ENCODE measurements at regions of chr3 and their contacts with region 1.

Region 1: DNA sequence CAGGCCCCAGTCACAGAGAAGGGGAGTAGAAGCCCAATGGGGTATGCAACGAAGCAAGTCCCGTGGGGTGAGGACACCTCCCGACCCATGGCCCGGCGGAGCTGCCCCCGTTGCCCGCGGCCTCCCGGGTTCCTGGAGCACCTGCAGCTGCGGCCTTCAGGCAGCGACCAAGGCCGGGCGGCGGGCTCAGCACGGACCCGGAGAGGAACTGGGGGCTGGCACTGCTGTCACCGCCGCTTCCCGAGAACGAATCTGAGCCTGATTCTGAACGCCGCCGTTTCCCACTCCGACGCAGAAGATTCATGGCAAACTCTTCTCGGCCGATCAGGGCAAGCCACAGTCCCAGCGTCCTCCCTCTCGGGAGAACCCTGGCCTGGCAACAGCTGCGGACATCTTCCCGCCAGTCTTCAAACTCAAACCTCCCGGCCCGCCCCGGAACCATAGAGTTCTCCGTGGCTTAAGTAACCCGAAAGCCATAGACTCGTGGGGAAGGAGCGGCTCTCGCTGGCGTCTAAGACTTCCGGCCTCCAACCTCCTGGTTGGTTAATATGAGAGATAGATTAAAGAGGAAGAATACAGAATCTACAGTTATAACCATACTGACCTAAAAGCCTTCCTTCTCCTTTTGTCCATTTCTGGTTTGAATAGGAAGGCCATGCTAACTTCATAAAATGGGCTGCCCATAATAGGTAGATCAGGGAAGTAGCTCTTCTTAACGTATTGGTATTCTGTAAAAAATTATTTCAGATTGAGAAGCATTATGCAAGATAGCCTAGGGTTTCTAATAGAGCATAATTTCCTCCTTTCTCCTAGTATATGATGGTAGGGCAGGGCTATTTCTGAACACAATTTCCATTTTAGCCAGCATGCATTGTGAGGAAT is at the start of gene POLQ:
- DNase-seq: peak; percentile 84 to 92 (median 88)
- H3K4me3 ChIP-seq: peak within 1 kb of the TSS; percentile 90 to 99
- H3K4me3 Mint-ChIP-seq: peak within 1 kb of the TSS; percentile 89 to 95 (median 92)
- H3K27ac ChIP-seq: peak within 1 kb of the TSS; percentile 64
- H3K27ac Mint-ChIP-seq: peak within 1 kb of the TSS; percentile 89 to 96 (median 92)
- H3K4me1 ChIP-seq: peaks cover 10% of the 10 kb centered on the region
- H3K4me1 Mint-ChIP-seq: peaks cover 6 to 11% (median 10%) of the 10 kb centered on the region in 4 donors
- H3K27me3 ChIP-seq: no peaks in the 10 kb centered on the region
- H3K27me3 Mint-ChIP-seq: no peaks in the 10 kb centered on the region
- total RNA-seq, gene POLQ: 0.28 to 0.35 TPM

Region 2: DNA sequence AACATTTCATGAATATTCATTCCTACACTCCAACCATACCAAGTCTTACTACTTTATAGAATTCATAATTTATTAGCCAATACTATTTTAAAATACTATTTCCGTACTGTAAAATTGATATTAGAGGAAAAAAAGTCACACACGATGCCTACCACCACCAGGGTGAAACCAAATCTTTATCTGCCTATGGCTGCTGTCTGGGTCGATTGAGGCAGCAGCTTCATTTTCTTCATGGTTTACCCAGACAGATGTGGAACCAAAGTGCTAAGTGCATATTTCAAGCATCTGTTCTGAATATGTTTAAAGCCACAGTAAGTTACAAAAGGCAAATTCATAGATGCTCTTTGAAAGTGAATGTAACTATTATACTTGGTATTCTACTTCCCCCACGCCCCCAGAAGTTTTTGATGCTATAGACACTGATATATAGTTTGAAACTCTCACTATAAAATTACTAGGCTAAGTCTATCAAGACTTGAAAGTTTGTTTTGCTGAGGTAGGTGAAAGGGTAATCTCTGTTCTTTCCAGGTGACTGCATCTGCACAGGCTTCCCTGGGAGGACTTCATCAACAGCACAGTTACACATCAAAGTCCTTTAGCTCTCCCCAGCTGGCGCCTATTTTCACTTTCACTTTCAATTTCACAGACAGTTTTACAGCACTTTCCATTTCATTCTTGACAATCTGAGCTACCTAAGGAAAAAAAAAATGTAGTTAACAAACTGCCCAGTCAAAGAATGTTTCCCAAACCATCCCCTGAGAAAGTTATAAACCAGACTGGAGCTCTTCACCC is 113.9 kb before region 1 on chr3:
- CTCF ChIA-PET with region 1: interaction called, 6 read pairs
- POLR2A ChIA-PET with region 1: no interaction called
- intact Hi-C with region 1: loop called (anchors 1 kb)
- DNase-seq: peak; percentile 63 to 77 (median 73)
- H3K4me3 ChIP-seq: peak overlapping the region in 1 of 2 donors; percentile 51
- H3K4me3 Mint-ChIP-seq: peak overlapping the region; percentile 71 to 88 (median 82)
- H3K27ac ChIP-seq: peak overlapping the region; percentile 25
- H3K27ac Mint-ChIP-seq: peak overlapping the region; percentile 70 to 94 (median 83)
- H3K4me1 ChIP-seq: peaks cover 21% of the 10 kb centered on the region
- H3K4me1 Mint-ChIP-seq: peaks cover 10 to 20% (median 14%) of the 10 kb centered on the region in 4 donors
- H3K27me3 ChIP-seq: no peaks in the 10 kb centered on the region
- H3K27me3 Mint-ChIP-seq: no peaks in the 10 kb centered on the region

Region 3: GRCh38 chr3:121592856-121593702 is 47.3 kb after region 1 on chr3 and contains the start of gene FBXO40:
- CTCF ChIA-PET with region 1: no interaction called
- POLR2A ChIA-PET with region 1: no interaction called
- intact Hi-C with region 1: no loop called
- DNase-seq: no peak
- H3K4me3 ChIP-seq: no peak within 1 kb of the TSS
- H3K4me3 Mint-ChIP-seq: no peak within 1 kb of the TSS
- H3K27ac ChIP-seq: no peak within 1 kb of the TSS
- H3K27ac Mint-ChIP-seq: peak within 1 kb of the TSS in 1 of 7 donors; percentile 9
- H3K4me1 ChIP-seq: no peaks in the 10 kb centered on the region
- H3K4me1 Mint-ChIP-seq: peaks cover 0 to 3% (median 0%) of the 10 kb centered on the region in 4 donors
- H3K27me3 ChIP-seq: no peaks in the 10 kb centered on the region
- H3K27me3 Mint-ChIP-seq: peaks cover 1 to 2% of the 10 kb centered on the region in 2 donors
- total RNA-seq, gene FBXO40: not detected

Region 4: GRCh38 chr3:121834696-121835464 is 289.1 kb after region 1 on chr3 and contains the starts of genes EAF2 and IQCB1:
- CTCF ChIA-PET with region 1: no interaction called
- POLR2A ChIA-PET with region 1: interaction called, 4 read pairs
- intact Hi-C with region 1: loop called (anchors 1 kb)
- DNase-seq: peak; percentile 97 to 98 (median 97)
- H3K4me3 ChIP-seq: peak within 1 kb of the TSS; percentile 83 to 96
- H3K4me3 Mint-ChIP-seq: peak within 1 kb of the TSS; percentile 92 to 98 (median 94)
- H3K27ac ChIP-seq: peak within 1 kb of the TSS; percentile 84
- H3K27ac Mint-ChIP-seq: peak within 1 kb of the TSS; percentile 77 to 98 (median 94)
- H3K4me1 ChIP-seq: peaks cover 30% of the 10 kb centered on the region
- H3K4me1 Mint-ChIP-seq: peaks cover 32 to 54% (median 44%) of the 10 kb centered on the region in 4 donors
- H3K27me3 ChIP-seq: no peaks in the 10 kb centered on the region
- H3K27me3 Mint-ChIP-seq: no peaks in the 10 kb centered on the region
- total RNA-seq, gene EAF2: 5.7 to 6.3 TPM
- total RNA-seq, gene IQCB1: 37.9 to 38.2 TPM

Region 5: DNA sequence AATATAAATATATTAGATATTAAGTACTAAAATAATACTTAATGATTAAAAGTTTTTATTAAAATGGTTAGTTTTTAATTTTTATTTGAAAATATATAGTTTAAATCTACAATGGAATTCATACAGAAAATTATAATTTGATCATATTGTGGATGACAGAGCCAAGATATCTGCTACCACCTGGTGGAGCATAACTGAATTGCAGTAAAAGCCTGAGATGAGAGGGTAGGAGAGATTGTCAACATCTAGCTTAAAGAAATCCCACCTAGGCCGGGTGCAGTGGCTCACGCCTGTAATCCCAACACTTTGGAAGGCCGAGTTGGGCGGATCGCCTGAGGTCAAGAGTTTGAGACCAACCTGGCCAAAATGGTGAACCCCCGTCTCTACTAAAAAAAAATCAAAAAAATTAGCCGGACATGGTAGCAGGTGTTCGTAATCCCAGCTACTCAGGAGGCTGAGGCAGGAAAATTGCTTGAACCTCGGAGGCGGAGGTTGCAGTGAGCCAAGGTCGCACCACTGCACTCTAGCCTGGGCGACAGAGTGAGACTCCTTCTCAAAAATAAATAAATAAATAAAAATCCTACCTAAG is 754.2 kb after region 1 on chr3:
- CTCF ChIA-PET with region 1: interaction called, 19 read pairs
- POLR2A ChIA-PET with region 1: no interaction called
- intact Hi-C with region 1: loop called (anchors 1 kb)
- DNase-seq: peak in 4 of 5 donors; percentile 36 to 50 (median 48)
- H3K4me3 ChIP-seq: no peak overlapping the region
- H3K4me3 Mint-ChIP-seq: no peak overlapping the region
- H3K27ac ChIP-seq: no peak overlapping the region
- H3K27ac Mint-ChIP-seq: no peak overlapping the region
- H3K4me1 ChIP-seq: peaks cover 19% of the 10 kb centered on the region
- H3K4me1 Mint-ChIP-seq: peaks cover 5 to 19% (median 10%) of the 10 kb centered on the region in 4 donors
- H3K27me3 ChIP-seq: no peaks in the 10 kb centered on the region
- H3K27me3 Mint-ChIP-seq: peaks cover 0 to 3% of the 10 kb centered on the region in 2 donors

Region 6: DNA sequence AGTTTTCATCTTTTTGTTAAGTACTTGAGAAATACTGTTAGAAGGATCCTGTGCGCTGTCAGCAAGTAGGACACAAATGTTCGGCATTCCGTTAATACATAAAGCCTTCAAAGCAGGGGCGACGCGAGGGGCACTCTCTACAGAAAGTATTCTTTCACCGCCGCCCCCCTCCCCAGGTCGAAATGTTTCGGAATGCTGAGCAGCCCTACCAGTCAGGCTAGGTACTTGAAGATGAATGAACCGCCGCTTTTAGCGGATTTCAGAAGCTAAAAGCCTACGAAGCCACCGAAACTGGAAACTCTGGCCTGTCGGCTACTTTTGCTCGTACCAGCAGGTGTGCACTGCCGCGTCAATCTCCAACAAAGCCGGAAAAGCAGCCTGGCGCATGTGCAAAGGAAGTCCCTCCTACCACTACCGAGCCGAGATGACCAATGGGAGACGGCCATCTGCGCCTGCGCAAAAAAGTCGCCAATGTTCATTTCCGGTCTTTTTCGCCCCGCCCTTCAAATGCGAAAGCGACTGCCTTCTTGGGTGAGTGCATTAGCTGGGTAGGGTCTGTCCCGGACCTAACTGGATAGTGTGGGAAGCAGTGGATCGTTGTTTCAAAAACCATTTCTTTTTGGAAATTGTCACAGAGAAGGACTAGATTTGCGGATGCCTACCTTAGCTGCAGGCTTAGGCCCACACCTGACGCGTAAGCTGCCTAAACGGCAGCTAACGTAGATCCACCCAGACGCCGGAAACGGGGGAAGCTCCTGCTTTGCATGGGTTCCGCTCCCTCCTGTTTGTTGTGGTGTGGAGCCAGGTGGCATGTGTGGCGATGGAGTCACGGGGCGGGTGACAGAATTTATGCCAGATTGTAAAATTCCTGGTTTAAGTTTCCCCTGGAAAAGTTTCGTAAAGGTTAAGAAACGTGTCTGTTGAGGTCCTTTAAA is 870.2 kb after region 1 on chr3 and contains the start of gene WDR5B:
- CTCF ChIA-PET with region 1: no interaction called
- POLR2A ChIA-PET with region 1: interaction called, 9 read pairs
- intact Hi-C with region 1: loop called (anchors 1 kb)
- DNase-seq: peak; percentile 98 to 99 (median 99)
- H3K4me3 ChIP-seq: peak within 1 kb of the TSS; percentile 61 to 63
- H3K4me3 Mint-ChIP-seq: peak within 1 kb of the TSS; percentile 96 to 100 (median 98)
- H3K27ac ChIP-seq: peak within 1 kb of the TSS; percentile 93
- H3K27ac Mint-ChIP-seq: peak within 1 kb of the TSS; percentile 97 to 100 (median 100)
- H3K4me1 ChIP-seq: peaks cover 35% of the 10 kb centered on the region
- H3K4me1 Mint-ChIP-seq: peaks cover 38 to 71% (median 49%) of the 10 kb centered on the region in 4 donors
- H3K27me3 ChIP-seq: no peaks in the 10 kb centered on the region
- H3K27me3 Mint-ChIP-seq: no peaks in the 10 kb centered on the region
- total RNA-seq, gene WDR5B: 19.2 to 19.4 TPM

Region 7: DNA sequence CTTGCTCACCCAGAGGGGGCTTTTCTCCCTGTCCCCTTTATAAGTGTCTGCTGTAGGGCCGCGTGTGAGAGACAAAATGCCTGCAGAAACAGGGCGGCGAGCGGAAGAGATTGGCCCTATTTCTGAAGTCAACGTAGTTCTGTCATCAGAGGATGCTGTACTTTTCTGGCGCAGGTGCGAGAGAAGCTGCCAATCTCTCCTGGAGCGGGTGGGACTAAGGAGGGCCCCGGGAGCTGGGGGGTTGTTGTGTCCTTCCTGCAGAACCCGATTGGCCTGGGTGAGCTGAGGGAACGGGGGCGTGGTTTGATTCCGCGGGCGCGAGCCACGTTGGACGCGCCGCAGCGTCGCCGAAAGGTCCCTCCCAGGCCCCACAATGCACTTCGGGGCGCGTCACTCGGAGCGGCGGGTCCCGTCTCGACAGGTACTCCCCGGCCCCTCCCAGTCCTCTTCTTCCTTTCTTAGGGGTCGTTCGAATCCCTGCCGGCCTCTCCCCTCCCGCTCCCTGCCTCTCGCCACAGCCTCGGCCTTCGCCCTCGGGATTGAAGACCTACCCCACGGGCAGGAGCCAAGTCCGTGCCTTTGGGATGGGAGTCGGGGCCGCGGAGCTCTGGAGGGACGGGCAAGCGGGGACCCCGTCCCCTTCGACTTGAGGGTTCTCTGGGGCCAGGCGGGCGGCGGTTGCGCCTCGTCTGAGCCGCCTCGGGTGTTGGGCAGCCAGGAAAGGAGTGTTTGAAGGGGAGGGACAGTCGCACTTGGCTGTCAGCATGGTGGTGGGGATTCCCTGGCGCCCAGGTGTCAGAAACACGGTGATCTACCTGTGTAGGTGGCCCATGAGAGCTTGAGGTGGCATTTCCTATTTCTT is 1656.0 kb after region 1 on chr3 and contains the start of gene SEC22A:
- CTCF ChIA-PET with region 1: no interaction called
- POLR2A ChIA-PET with region 1: interaction called, 4 read pairs
- intact Hi-C with region 1: loop called (anchors 1 kb)
- DNase-seq: peak; percentile 95 to 98 (median 98)
- H3K4me3 ChIP-seq: peak within 1 kb of the TSS; percentile 82 to 91
- H3K4me3 Mint-ChIP-seq: peak within 1 kb of the TSS; percentile 88 to 98 (median 90)
- H3K27ac ChIP-seq: peak within 1 kb of the TSS; percentile 98
- H3K27ac Mint-ChIP-seq: peak within 1 kb of the TSS; percentile 92 to 99 (median 98)
- H3K4me1 ChIP-seq: peaks cover 20% of the 10 kb centered on the region
- H3K4me1 Mint-ChIP-seq: peaks cover 21 to 38% (median 28%) of the 10 kb centered on the region in 4 donors
- H3K27me3 ChIP-seq: no peaks in the 10 kb centered on the region
- H3K27me3 Mint-ChIP-seq: peaks cover 0 to 4% of the 10 kb centered on the region in 2 donors
- total RNA-seq, gene SEC22A: 19.4 to 23.2 TPM

Measured in CD4-positive, alpha-beta memory T cell (primary cell).